ENCODE measurements at regions of chr19 and their contacts with region 1.

Region 1: DNA sequence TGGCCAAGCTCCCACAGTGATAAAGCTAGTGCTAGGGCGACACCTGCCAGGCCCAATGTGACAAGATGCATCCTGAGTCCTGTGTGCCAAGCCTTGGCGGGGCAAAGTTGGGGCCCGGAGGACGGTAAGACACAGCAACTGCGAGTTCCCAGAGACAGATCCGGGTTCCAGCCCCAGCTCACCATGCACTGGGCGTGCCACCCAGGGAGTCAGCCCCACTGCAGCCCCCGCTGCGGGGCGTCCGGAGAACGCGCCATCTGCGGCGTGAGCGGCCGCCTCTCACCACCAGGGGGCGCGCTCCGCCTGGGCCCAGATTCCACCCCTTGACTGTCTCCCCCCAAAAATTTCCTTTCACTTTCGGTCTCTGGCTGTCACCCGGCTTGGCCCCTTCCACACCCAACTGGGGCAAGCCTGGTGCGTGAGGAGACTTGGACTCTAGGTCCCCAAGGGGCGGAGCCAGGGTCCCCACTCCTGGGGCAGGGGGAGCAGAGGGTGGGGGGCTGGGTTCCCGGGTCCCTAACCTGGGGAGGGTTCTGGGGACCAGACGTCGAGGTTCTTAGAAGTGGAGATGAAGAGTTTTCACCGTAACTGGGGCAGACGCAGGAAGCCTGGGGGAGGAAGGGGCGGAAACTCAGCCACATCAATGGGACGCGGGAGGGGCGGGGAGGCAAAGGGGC is at the start of gene FLT3LG:
- DNase-seq: no peak
- H3K4me3 ChIP-seq: peak within 1 kb of the TSS; percentile 72
- H3K27ac ChIP-seq: peak within 1 kb of the TSS; percentile 11
- H3K27me3 ChIP-seq: no peaks in the 10 kb centered on the region
- CTCF ChIP-seq: peak; percentile 96
- polyA plus RNA-seq, gene FLT3LG: 3.7 and 5.9 TPM in 2 replicates

Region 2: DNA sequence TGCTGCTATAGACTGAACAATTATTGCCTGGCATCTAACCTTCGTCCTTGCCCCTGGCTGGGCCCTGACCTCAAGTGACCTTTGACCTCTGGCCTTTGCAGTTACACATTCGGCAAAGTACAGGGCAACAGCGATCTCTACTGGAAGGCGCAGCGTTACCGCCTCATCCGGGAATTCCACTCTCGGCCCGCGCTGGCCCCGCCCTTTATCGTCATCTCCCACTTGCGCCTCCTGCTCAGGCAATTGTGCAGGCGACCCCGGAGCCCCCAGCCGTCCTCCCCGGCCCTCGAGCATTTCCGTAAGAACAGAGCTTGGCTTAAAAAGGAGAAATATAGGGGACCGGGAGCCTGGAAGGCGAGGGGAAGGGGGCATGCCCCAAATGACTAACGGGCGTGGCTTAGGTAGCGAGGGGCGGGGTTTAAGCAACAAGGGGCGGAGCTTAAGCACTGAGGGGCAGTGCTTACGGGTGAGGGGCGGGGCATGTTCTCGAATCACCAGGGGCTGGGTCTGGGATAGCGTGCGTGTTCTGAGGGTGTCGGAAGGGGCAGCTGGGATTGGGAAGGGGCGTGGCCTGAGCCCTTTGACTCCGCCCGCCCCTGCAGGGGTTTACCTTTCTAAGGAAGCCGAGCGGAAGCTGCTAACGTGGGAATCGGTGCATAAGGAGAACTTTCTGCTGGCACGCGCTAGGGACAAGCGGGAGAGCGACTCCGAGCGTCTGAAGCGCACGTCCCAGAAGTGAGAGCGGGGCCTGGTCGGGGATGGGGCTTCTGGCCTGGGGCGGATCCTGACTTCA is 263.7 kb before region 1 on chr19:
- CTCF ChIA-PET with region 1: no interaction called
- POLR2A ChIA-PET with region 1: no interaction called
- DNase-seq: no peak
- H3K4me3 ChIP-seq: no peak overlapping the region
- H3K27ac ChIP-seq: no peak overlapping the region
- H3K27me3 ChIP-seq: no peaks in the 10 kb centered on the region
- CTCF ChIP-seq: no peak

Region 3: DNA sequence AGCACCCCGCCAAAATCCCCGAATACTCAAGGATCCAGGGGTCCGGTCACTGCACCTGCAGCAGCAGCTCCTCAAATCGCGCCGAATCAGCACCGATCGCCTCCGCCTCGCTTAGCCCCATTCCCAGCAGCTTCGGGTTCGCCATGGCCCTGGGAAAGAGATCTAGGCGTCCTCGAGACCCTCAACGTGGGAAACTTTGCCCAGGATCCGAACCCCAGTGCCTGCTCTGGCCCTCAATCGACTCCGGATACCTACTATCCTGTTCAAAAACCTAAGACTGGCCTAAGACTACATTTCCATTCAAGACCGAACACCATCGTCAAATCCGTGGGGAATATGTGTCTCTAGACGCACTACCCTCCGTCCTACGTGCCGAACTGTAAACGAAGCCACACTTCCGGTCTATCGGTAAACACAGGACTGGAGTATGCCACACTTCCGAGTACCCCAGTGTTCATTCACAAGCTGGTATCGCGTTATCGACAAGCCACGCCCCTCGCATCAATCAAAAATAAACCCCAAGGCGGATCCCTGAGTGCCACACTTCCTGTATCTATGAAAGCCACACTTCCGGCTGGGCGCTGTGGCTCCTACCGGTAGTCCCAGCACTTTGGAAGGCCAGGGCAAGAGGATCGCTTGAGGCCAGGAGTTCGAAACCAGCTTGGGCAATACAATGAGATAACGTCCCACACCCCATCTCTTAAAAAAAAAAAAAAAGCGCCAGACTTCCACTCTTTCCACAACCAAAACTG is 22.4 kb before region 1 on chr19 and contains the start of gene PIH1D1:
- CTCF ChIA-PET with region 1: interaction called, 10 read pairs
- POLR2A ChIA-PET with region 1: interaction called, 9 read pairs
- DNase-seq: peak; percentile 97
- H3K4me3 ChIP-seq: peak within 1 kb of the TSS; percentile 93
- H3K27ac ChIP-seq: peak within 1 kb of the TSS; percentile 97
- H3K27me3 ChIP-seq: no peaks in the 10 kb centered on the region
- CTCF ChIP-seq: peak; percentile 34; the same call in 1 of the 2 replicates
- polyA plus RNA-seq, gene PIH1D1: 60.3 and 62.5 TPM in 2 replicates